MCF 10A (cell line): ENCODE measurements at regions of chr5 and their contacts with region 1.

Region 1: GRCh38 chr5:96226941-96227552 is 206.0 kb downstream of the PCSK1 start:
- DNase-seq: peak; percentile 77
- H3K4me3 Mint-ChIP-seq: peak overlapping the region; percentile 46
- H3K27ac Mint-ChIP-seq: peak overlapping the region; percentile 82
- H3K4me1 Mint-ChIP-seq: peaks cover 38% of the 10 kb centered on the region
- H3K27me3 Mint-ChIP-seq: no peaks in the 10 kb centered on the region
- CTCF ChIP-seq: no peak

Region 2: GRCh38 chr5:95858661-95859326 is 368.3 kb before region 1 on chr5:
- CTCF ChIA-PET with region 1: no interaction called
- POLR2A ChIA-PET with region 1: interaction called, 8 read pairs
- intact Hi-C with region 1: loop called (anchors 1 kb)
- DNase-seq: peak; percentile 96
- H3K4me3 Mint-ChIP-seq: peak overlapping the region; percentile 67
- H3K27ac Mint-ChIP-seq: peak overlapping the region; percentile 99
- H3K4me1 Mint-ChIP-seq: peaks cover 57% of the 10 kb centered on the region
- H3K27me3 Mint-ChIP-seq: no peaks in the 10 kb centered on the region
- CTCF ChIP-seq: peak; percentile 93

Region 3: GRCh38 chr5:96026406-96027041 is 200.5 kb before region 1 on chr5:
- CTCF ChIA-PET with region 1: no interaction called
- POLR2A ChIA-PET with region 1: no interaction called
- intact Hi-C with region 1: loop called (anchors 5 kb)
- DNase-seq: peak; percentile 55
- H3K4me3 Mint-ChIP-seq: no peak overlapping the region
- H3K27ac Mint-ChIP-seq: peak overlapping the region; percentile 77
- H3K4me1 Mint-ChIP-seq: peaks cover 40% of the 10 kb centered on the region
- H3K27me3 Mint-ChIP-seq: no peaks in the 10 kb centered on the region
- CTCF ChIP-seq: no peak

Region 4: DNA sequence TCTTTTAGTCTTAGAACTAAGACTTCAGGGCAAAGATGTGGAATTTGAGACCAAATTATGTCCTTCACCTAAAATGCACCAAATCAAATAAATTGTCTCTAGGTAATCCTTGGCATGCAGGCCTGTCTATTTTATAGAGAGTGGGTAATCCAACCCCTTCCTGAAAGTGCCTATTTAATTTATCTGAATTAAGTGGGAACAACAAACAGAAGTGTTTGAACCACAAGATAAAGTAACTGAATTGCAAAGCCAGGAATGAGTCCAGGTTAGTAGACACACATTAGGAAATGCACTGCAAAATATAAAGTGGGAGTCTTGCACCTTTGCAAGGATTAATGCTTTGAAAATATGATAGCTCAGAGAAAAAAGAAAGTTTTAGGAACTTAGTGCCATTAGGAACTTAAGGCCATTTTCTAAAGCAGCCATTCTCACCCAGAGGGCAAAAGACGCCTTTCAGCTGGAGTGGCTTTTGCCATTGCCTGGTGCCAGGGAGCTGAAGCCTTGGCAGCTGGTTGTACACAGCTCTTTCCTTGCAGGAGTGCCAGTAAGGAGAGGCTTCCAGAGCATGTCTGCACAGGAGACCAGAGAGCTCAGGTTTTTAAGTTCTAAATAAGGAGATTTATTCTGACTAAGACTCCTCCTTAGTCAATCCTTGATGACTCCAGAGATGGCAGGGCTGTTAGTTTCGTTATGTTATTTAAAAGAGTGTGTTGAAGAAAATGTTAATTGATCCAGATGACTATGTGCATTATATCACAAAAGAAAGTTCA is 113.7 kb before region 1 on chr5:
- CTCF ChIA-PET with region 1: interaction called, 4 read pairs
- POLR2A ChIA-PET with region 1: no interaction called
- intact Hi-C with region 1: loop called (anchors 10 kb)
- DNase-seq: peak; percentile 73
- H3K4me3 Mint-ChIP-seq: no peak overlapping the region
- H3K27ac Mint-ChIP-seq: peak overlapping the region; percentile 87
- H3K4me1 Mint-ChIP-seq: peaks cover 29% of the 10 kb centered on the region
- H3K27me3 Mint-ChIP-seq: no peaks in the 10 kb centered on the region
- CTCF ChIP-seq: no peak

Region 5: DNA sequence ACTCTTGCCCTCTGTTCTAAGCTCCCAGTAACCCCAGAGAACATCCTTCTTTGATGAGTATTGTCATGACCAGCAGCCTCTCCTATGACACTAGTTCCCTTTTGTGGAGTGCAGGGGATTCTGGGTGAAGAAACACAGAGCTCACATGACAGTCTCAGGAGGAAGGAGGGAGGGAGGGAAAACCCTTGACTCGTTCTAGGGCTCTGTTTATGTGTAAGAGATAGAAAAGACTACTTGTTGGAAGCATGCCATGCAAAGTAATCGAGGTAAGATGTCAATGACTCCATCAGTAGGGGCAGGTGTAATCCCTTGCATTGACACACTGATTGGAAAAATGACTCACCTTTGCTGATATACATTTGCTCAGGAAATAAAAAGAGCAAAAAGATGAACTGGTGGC is 75.2 kb before region 1 on chr5:
- CTCF ChIA-PET with region 1: interaction called, 5 read pairs
- POLR2A ChIA-PET with region 1: interaction called, 38 read pairs
- intact Hi-C with region 1: no loop called
- DNase-seq: no peak
- H3K4me3 Mint-ChIP-seq: no peak overlapping the region
- H3K27ac Mint-ChIP-seq: no peak overlapping the region
- H3K4me1 Mint-ChIP-seq: peaks cover 28% of the 10 kb centered on the region
- H3K27me3 Mint-ChIP-seq: no peaks in the 10 kb centered on the region
- CTCF ChIP-seq: no peak

Region 6: GRCh38 chr5:96256778-96257470 is 29.9 kb after region 1 on chr5:
- CTCF ChIA-PET with region 1: interaction called, 4 read pairs
- POLR2A ChIA-PET with region 1: interaction called, 16 read pairs
- intact Hi-C with region 1: no loop called
- DNase-seq: peak; percentile 76
- H3K4me3 Mint-ChIP-seq: no peak overlapping the region
- H3K27ac Mint-ChIP-seq: no peak overlapping the region
- H3K4me1 Mint-ChIP-seq: peaks cover 51% of the 10 kb centered on the region
- H3K27me3 Mint-ChIP-seq: no peaks in the 10 kb centered on the region
- CTCF ChIP-seq: no peak

Region 7: GRCh38 chr5:96297290-96297689 is 70.2 kb after region 1 on chr5:
- CTCF ChIA-PET with region 1: no interaction called
- POLR2A ChIA-PET with region 1: interaction called, 18 read pairs
- intact Hi-C with region 1: no loop called
- DNase-seq: peak; percentile 27
- H3K4me3 Mint-ChIP-seq: no peak overlapping the region
- H3K27ac Mint-ChIP-seq: peak overlapping the region; percentile 93
- H3K4me1 Mint-ChIP-seq: peaks cover 33% of the 10 kb centered on the region
- H3K27me3 Mint-ChIP-seq: no peaks in the 10 kb centered on the region
- CTCF ChIP-seq: no peak

Region 8: GRCh38 chr5:96344678-96345577 is 117.9 kb after region 1 on chr5:
- CTCF ChIA-PET with region 1: no interaction called
- POLR2A ChIA-PET with region 1: no interaction called
- intact Hi-C with region 1: no loop called
- DNase-seq: peak; percentile 83
- H3K4me3 Mint-ChIP-seq: no peak overlapping the region
- H3K27ac Mint-ChIP-seq: no peak overlapping the region
- H3K4me1 Mint-ChIP-seq: peaks cover 16% of the 10 kb centered on the region
- H3K27me3 Mint-ChIP-seq: no peaks in the 10 kb centered on the region
- CTCF ChIP-seq: peak; percentile 67